OCI-LY7 (cell line): ENCODE measurements at regions of chr20 and their contacts with region 1.

Region 1: DNA sequence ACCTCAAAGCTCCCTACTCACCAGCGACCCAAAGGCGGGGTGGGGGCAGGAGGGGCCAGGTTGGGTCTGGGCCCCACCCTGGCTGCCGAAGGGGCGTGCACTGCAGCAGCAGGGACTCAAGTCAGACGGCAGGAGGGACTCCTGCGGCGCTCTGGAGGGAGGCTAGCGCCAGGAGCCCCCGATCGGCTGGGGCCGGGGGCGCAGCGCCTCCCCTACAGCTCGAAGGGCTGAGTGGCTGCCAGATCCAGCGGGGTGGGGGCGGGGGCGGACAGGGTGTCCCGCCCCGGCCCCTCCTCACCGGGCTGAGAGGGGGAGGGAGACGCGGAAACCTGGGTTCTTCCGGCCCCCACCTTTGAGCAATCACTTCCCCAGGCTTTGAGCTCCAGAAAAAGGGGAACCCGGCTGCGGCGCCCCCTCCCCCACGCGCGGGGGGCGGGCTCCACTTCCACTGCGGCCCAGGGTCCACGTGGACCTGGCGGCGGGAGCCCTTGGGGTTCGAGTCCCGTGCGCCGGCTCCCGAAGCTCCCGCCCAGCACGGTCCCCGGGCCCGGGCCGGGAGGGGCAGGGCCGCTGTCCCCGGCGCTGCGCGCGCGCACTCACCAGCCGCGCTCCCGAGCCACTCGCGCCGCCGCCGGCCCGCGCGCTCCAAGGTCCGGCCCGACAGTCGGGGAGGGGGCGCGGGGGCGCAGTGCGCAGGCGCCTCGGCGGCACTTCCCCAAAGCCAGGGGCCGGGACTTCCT is at the start of gene RGS19:
- DNase-seq: peak; percentile 87
- H3K4me3 ChIP-seq: peak within 1 kb of the TSS; percentile 94
- H3K27ac ChIP-seq: peak within 1 kb of the TSS; percentile 97
- H3K4me1 ChIP-seq: peaks cover 44% of the 10 kb centered on the region
- CTCF ChIP-seq: peak; percentile 23; the same call in 1 of the 2 replicates
- total RNA-seq, gene RGS19: 85.5 and 106 TPM in 2 replicates

Region 2: DNA sequence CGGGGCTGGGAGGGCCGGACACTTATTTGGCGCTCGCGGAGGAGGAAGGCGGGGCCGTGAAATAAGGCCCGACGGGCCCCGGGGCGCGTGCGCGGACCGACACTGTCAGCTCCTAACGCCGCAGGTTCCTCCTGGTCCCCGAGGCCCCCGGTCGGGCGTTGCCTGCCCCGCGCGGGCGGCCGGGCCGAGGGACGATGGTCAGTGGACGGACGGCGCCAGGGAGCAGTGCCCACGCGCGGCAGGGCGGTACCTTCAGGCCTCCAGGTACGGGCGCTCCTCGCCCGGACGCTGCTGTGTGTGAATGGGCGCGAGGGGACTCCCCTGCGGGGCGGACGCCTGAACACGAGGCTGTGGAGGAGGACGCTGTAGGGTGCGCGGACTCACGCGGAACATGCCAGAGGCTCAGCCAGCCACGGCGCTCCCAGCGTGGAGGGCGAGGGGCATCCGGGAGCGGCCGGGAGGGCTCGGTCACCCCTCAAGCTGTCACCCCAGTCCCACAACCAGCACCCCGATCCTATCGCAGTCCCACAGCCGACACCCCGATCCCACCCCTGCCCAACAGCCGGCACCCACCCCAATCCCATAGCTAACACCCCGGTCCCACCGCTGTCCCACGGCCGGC is 452.2 kb before region 1 on chr20:
- CTCF ChIA-PET with region 1: no interaction called
- POLR2A ChIA-PET with region 1: no interaction called
- intact Hi-C with region 1: loop called (anchors 5 kb)
- DNase-seq: peak; percentile 97
- H3K4me3 ChIP-seq: peak overlapping the region; percentile 96
- H3K27ac ChIP-seq: peak overlapping the region; percentile 48
- H3K4me1 ChIP-seq: peaks cover 15% of the 10 kb centered on the region
- CTCF ChIP-seq: no peak

Region 3: GRCh38 chr20:63980806-63981728 is 98.4 kb before region 1 on chr20 and contains the start of gene PRPF6:
- CTCF ChIA-PET with region 1: interaction called, 3 read pairs
- POLR2A ChIA-PET with region 1: no interaction called
- intact Hi-C with region 1: loop called (anchors 5 kb)
- DNase-seq: peak; percentile 99
- H3K4me3 ChIP-seq: peak within 1 kb of the TSS; percentile 82
- H3K27ac ChIP-seq: peak within 1 kb of the TSS; percentile 89
- H3K4me1 ChIP-seq: peaks cover 35% of the 10 kb centered on the region
- CTCF ChIP-seq: peak; percentile 86
- total RNA-seq, gene PRPF6: 45.1 and 61.5 TPM in 2 replicates

Region 4: GRCh38 chr20:64053841-64054661 is 25.4 kb before region 1 on chr20:
- CTCF ChIA-PET with region 1: no interaction called
- POLR2A ChIA-PET with region 1: interaction called, 3 read pairs
- intact Hi-C with region 1: loop called (anchors 1 kb)
- DNase-seq: peak; percentile 69
- H3K4me3 ChIP-seq: no peak overlapping the region
- H3K27ac ChIP-seq: no peak overlapping the region
- H3K4me1 ChIP-seq: peaks cover 14% of the 10 kb centered on the region
- CTCF ChIP-seq: peak; percentile 72

Region 5: GRCh38 chr20:64062596-64063388 is 16.7 kb before region 1 on chr20 and contains the start of gene TCEA2:
- CTCF ChIA-PET with region 1: no interaction called
- POLR2A ChIA-PET with region 1: interaction called, 3 read pairs
- intact Hi-C with region 1: loop called (anchors 2 kb)
- DNase-seq: peak; percentile 96
- H3K4me3 ChIP-seq: peak within 1 kb of the TSS; percentile 86
- H3K27ac ChIP-seq: no peak within 1 kb of the TSS
- H3K4me1 ChIP-seq: peaks cover 45% of the 10 kb centered on the region
- CTCF ChIP-seq: no peak
- total RNA-seq, gene TCEA2: 36.4 and 37.5 TPM in 2 replicates

Region 6: DNA sequence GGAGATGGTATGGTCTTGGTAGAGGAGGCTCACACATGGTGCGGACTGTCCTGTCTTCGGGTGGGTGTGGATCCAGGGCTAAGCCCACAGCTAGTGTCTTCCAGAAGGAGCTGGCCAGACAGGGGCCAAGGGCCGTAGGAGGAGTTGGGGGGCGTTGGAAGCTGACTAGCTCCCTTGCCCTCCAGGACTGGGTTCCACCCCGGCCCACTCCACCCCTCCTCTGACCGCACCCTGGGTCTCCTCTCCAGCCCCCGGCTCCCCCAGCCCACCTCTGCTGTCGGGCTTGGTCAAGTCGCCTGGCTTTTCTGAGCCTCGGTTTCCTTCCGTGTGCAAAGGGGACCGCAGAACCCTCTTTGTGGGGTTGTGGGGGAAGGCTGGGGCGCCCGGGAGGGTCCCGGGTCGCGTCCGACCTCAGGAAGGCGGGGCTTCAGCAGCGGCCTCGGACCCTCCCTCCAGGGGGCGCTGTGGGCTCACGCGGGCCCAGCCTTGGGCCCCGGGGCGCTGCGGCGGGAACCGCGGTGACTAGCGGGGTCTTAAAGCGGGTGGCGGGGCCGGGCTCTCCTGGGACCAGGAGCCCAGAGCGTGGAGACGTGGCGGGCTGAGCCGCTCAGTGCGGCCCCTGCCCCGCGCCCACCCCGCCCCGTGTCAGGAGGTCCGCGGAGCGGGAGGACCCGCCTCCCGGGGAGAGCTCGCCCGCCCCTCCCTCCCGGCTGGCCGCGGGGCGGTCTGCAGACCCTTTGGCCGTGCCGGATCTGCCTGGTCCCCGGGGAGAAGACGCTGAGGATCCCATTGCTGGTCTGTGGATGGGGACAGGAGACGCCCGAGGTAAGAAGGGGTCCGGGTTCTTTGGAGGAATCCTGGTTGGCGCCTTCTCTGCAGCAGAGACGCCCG is 22.5 kb after region 1 on chr20:
- CTCF ChIA-PET with region 1: interaction called, 7 read pairs
- POLR2A ChIA-PET with region 1: interaction called, 5 read pairs
- intact Hi-C with region 1: loop called (anchors 2 kb)
- DNase-seq: peak; percentile 73
- H3K4me3 ChIP-seq: peak overlapping the region; percentile 65
- H3K27ac ChIP-seq: no peak overlapping the region
- H3K4me1 ChIP-seq: peaks cover 37% of the 10 kb centered on the region
- CTCF ChIP-seq: peak; percentile 86

Region 7: DNA sequence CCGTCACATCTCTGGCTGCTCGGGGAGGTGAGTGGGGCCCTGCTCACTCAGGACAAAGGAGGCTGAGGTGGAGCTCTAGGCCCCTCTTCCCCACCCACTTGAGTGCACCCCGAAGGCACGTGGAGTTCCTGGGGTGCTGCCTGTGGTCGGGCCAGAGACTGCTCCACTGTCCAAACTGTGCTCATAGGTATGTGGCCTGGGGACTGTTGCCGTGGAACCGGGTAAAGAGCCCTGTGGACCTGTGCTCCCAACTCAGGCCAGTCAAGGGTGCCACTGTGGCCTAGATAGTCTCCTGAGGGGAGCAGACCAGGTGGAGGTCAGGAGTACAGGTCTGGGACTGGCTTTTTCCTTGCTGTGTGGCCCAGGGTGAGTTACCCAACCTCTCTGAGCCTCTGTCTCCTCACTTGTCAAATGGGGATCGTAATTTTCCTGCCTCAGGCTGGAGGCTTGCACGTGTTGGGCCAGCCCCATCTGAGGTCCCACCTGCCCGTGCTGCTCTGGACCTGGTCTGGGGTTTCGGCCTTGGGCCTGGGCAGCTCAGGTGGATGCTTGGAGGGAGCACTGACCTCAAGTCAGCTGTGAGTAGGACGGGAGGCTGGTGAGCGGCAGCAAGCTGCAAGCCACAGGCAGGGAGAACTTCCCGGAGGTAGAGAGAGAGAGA is 40.4 kb after region 1 on chr20:
- CTCF ChIA-PET with region 1: no interaction called
- POLR2A ChIA-PET with region 1: no interaction called
- intact Hi-C with region 1: loop called (anchors 1 kb)
- DNase-seq: peak; percentile 16
- H3K4me3 ChIP-seq: peak overlapping the region; percentile 29
- H3K27ac ChIP-seq: peak overlapping the region; percentile 9
- H3K4me1 ChIP-seq: peaks cover 11% of the 10 kb centered on the region
- CTCF ChIP-seq: no peak